Endothelial cell of umbilical vein (primary cell): ENCODE measurements at regions of chr12 and their contacts with region 1.

Region 1: DNA sequence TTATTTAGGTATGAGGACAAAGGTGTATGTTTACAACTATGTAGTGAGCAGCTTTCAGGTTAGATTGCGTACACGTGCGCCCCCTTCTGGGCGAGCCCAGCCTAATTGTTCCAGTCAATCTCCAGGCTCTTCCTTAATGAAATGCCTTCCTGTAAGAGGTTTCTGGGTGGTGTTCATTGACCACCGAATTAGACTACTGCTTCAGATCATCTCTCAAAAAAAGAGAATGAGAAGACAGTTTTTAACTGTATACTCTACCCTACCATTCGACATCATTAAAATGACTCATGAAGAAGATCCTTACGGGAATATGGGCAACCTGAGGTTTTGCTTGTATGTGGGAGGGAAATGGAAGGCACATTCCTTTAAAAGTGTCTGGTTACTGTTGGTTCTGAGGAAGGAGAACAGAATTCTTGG is 2.1 kb downstream of the LUM start:
- DNase-seq: peak; percentile 74
- H3K4me3 ChIP-seq: no peak overlapping the region
- H3K27ac ChIP-seq: no peak overlapping the region
- H3K4me1 ChIP-seq: peaks cover 2% of the 10 kb centered on the region
- H3K27me3 ChIP-seq: no peaks in the 10 kb centered on the region
- CTCF ChIP-seq: peak; percentile 67 to 69
- POLR2A ChIP-seq: no peak

Region 2: GRCh38 chr12:90627180-90627896 is 481.8 kb before region 1 on chr12:
- CTCF ChIA-PET with region 1: no interaction called
- POLR2A ChIA-PET with region 1: no interaction called
- dilution Hi-C with region 1: no loop called
- intact Hi-C with region 1: no loop called
- DNase-seq: peak; percentile 9
- H3K4me3 ChIP-seq: no peak overlapping the region
- H3K27ac ChIP-seq: no peak overlapping the region
- H3K4me1 ChIP-seq: no peaks in the 10 kb centered on the region
- H3K27me3 ChIP-seq: no peaks in the 10 kb centered on the region
- CTCF ChIP-seq: no peak
- POLR2A ChIP-seq: no peak

Region 3: GRCh38 chr12:90978117-90978770 is 130.9 kb before region 1 on chr12:
- CTCF ChIA-PET with region 1: interaction called, 30 read pairs
- POLR2A ChIA-PET with region 1: no interaction called
- dilution Hi-C with region 1: no loop called
- intact Hi-C with region 1: loop called (anchors 1 kb)
- DNase-seq: peak; percentile 70
- H3K4me3 ChIP-seq: no peak overlapping the region
- H3K27ac ChIP-seq: no peak overlapping the region
- H3K4me1 ChIP-seq: no peaks in the 10 kb centered on the region
- H3K27me3 ChIP-seq: no peaks in the 10 kb centered on the region
- CTCF ChIP-seq: peak; percentile 37 to 49
- POLR2A ChIP-seq: no peak

Region 4: GRCh38 chr12:91098941-91099340 is 10.2 kb before region 1 on chr12:
- CTCF ChIA-PET with region 1: interaction called, 25 read pairs
- POLR2A ChIA-PET with region 1: no interaction called
- dilution Hi-C with region 1: no loop called
- intact Hi-C with region 1: no loop called
- DNase-seq: no peak
- H3K4me3 ChIP-seq: no peak overlapping the region
- H3K27ac ChIP-seq: no peak overlapping the region
- H3K4me1 ChIP-seq: no peaks in the 10 kb centered on the region
- H3K27me3 ChIP-seq: no peaks in the 10 kb centered on the region
- CTCF ChIP-seq: no peak
- POLR2A ChIP-seq: no peak

Region 5: DNA sequence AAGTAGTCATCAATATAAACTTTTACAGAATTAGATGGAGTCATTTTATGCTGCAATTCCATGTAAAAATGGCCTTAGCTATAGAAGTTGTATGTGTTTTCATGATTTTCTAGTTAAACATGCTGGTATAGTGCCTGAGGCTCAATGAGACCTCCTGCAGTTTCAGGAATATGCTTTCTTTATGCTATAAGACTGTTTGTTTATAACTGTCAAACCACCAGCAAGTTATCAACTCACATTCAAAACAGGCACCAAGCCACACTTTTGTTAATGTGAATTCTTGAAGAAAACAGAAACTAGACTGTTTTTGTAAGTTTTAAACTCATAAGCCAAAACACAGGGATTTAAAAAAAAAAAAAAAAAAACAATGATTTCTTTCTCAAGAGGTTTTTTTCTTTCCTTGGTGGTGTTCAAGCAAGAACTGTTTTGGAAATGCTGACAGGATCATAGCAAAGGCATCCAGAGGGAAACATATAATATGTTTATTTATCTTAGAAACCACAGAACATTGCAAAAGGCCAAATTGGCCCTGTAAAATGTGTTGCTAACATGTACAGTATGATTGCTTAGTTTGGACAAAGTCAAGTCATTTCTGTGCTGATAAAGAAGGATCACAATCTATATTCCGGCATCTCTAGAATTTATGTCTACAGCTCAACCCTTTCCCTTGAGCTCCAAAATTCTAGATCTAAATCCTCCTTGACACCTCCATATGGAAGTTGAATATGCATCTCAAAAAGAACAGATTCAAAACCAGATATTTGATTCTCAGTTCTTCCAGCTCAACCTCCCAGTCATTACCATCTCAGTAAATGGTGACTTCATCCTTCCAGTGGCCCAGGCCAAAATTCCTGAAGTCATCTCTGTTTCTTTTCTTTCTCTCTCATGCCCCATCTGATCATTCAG is 31.1 kb after region 1 on chr12:
- CTCF ChIA-PET with region 1: interaction called, 12 read pairs
- POLR2A ChIA-PET with region 1: no interaction called
- dilution Hi-C with region 1: no loop called
- intact Hi-C with region 1: no loop called
- DNase-seq: peak; percentile 27
- H3K4me3 ChIP-seq: no peak overlapping the region
- H3K27ac ChIP-seq: no peak overlapping the region
- H3K4me1 ChIP-seq: peaks cover 21% of the 10 kb centered on the region
- H3K27me3 ChIP-seq: no peaks in the 10 kb centered on the region
- CTCF ChIP-seq: no peak
- POLR2A ChIP-seq: no peak

Region 6: DNA sequence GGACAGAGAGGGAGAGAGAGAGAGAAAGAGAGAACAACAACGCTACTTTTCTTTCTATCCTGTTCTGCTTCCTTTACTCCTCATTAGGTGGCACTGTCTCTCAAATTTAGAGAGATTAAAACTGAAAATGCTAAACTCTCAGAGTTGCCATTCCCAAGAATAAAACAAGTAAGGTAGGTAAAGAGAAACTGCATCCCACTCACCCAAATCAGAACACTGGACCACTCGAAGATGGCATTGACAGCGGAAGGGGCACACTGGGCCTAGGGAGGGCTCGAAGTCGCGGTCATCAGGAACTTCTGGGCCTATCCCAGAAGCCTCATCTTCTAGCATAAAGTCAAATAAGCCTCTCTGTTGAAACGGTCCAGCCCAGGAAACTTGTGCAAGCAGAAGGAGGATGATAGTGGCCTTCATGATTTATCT is 69.0 kb after region 1 on chr12:
- CTCF ChIA-PET with region 1: interaction called, 11 read pairs
- POLR2A ChIA-PET with region 1: no interaction called
- dilution Hi-C with region 1: no loop called
- intact Hi-C with region 1: no loop called
- DNase-seq: peak; percentile 51
- H3K4me3 ChIP-seq: no peak overlapping the region
- H3K27ac ChIP-seq: no peak overlapping the region
- H3K4me1 ChIP-seq: peaks cover 10% of the 10 kb centered on the region
- H3K27me3 ChIP-seq: no peaks in the 10 kb centered on the region
- CTCF ChIP-seq: peak; percentile 25 to 32
- POLR2A ChIP-seq: no peak